Calu3 (cell line): ENCODE measurements at regions of chr22 and their contacts with region 1.

Region 1: DNA sequence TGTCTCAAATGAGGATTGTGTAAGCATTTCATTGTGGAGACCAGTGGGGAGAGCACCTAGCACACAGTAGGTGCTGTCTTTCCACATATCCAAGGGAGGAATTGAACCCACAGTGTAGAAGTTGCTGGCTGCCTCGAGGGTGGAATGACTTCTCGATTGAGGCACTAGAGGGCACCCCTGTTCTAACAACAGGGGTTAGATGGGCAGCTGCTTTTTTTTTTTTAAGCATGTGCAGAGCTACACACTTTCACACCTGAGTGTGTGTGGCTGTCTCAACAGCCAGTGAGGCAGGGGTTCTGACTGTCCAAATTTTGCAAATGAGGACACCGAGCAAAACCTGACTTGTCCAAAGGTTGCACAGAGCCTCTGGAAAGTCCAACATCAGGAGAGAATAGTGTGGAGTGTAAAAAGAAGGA is 118.2 kb upstream of the CRYBB3 start:
- DNase-seq: peak; percentile 75
- H3K4me3 Mint-ChIP-seq: no peak overlapping the region
- H3K27ac Mint-ChIP-seq: no peak overlapping the region
- H3K4me1 Mint-ChIP-seq: peaks cover 48% of the 10 kb centered on the region
- H3K27me3 Mint-ChIP-seq: no peaks in the 10 kb centered on the region
- CTCF ChIP-seq: peak; percentile 54

Region 2: DNA sequence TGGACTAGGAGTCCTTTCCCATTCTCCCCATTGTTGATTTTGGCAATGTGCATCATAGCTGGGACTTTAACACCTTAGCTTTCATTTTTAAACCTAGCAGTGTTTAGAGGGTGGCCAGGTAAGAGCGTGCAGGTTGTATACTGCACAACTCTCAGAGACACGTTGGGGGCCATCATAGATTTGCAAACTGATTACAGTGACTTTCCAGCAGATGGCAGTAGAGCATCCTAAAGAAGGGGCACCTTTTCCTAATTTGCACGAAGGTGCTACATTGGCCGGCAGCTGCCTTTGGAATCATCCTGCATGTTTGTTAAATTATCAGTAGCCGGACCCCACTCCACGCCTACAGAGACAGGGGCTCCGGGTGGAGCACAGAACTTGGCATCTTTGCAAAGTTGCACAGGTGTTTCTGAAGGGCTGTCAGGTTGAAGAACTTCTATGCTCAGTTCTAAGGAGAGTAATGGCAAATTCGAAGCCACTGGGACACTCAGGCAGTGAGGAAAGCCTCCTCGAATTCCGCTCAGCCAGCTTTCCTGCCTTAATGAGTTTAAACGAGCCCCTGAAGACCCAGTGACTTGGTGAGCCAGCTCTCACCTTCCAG is 142.6 kb before region 1 on chr22:
- CTCF ChIA-PET with region 1: no interaction called
- intact Hi-C with region 1: no loop called
- DNase-seq: peak; percentile 57
- H3K4me3 Mint-ChIP-seq: no peak overlapping the region
- H3K27ac Mint-ChIP-seq: no peak overlapping the region
- H3K4me1 Mint-ChIP-seq: peaks cover 2% of the 10 kb centered on the region
- H3K27me3 Mint-ChIP-seq: no peaks in the 10 kb centered on the region
- CTCF ChIP-seq: peak; percentile 70

Region 3: GRCh38 chr22:25134028-25134427 is 52.6 kb after region 1 on chr22:
- CTCF ChIA-PET with region 1: interaction called, 5 read pairs
- intact Hi-C with region 1: loop called (anchors 5 kb)
- DNase-seq: peak; percentile 63
- H3K4me3 Mint-ChIP-seq: no peak overlapping the region
- H3K27ac Mint-ChIP-seq: peak overlapping the region; percentile 39
- H3K4me1 Mint-ChIP-seq: peaks cover 48% of the 10 kb centered on the region
- H3K27me3 Mint-ChIP-seq: no peaks in the 10 kb centered on the region
- CTCF ChIP-seq: no peak

Region 4: GRCh38 chr22:25146307-25146706 is 64.9 kb after region 1 on chr22:
- CTCF ChIA-PET with region 1: no interaction called
- intact Hi-C with region 1: no loop called
- DNase-seq: no peak
- H3K4me3 Mint-ChIP-seq: no peak overlapping the region
- H3K27ac Mint-ChIP-seq: no peak overlapping the region
- H3K4me1 Mint-ChIP-seq: peaks cover 9% of the 10 kb centered on the region
- H3K27me3 Mint-ChIP-seq: no peaks in the 10 kb centered on the region
- CTCF ChIP-seq: no peak

Region 5: DNA sequence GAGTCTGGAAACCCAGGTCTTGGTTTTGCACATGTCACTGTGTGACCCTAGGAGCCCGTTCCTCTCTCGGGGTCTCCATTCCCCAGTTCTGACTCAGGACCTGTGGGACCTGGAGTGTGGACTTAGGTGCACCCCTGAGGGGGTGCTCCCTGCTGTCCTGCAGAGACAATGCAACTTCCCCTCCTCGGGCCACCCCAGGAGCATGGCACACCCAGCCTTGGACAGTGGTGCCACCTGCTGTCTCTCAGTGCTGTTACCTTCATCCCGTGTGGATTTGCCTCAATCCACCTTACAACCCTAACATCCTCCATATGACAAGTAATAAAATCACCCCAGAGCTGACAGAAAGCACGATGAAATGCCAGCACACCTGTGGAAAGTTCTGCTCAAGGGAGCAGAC is 90.7 kb after region 1 on chr22:
- CTCF ChIA-PET with region 1: interaction called, 8 read pairs
- intact Hi-C with region 1: loop called (anchors 1 kb)
- DNase-seq: peak; percentile 72
- H3K4me3 Mint-ChIP-seq: no peak overlapping the region
- H3K27ac Mint-ChIP-seq: no peak overlapping the region
- H3K4me1 Mint-ChIP-seq: peaks cover 26% of the 10 kb centered on the region
- H3K27me3 Mint-ChIP-seq: no peaks in the 10 kb centered on the region
- CTCF ChIP-seq: peak; percentile 76